PC-9 (cell line): ENCODE measurements at regions of chr17 and their contacts with region 1.

Region 1: DNA sequence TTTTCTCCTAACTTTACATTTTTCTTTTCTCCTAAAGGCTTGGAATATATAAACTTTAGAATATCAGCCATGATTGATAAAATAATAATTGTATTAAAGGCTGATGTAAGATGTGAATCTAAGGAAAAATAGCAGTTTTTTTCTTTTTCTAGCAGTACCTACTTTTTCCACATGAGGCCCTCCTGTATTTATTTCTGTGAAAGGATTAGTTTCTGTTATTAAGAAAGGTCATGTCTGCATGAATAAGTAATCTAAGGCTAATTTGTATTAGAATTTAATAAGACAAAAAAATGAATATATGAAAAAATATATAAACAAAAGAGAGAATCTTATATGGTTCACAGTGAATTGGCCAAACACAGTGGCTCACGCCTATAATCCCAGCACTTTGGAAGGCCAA is 85.3 kb downstream of the STXBP4 start:
- DNase-seq: no peak
- H3K4me3 ChIP-seq: no peak overlapping the region
- H3K27ac ChIP-seq: no peak overlapping the region
- H3K4me1 ChIP-seq: no peaks in the 10 kb centered on the region
- H3K27me3 ChIP-seq: no peaks in the 10 kb centered on the region
- CTCF ChIP-seq: peak; percentile 59

Region 2: DNA sequence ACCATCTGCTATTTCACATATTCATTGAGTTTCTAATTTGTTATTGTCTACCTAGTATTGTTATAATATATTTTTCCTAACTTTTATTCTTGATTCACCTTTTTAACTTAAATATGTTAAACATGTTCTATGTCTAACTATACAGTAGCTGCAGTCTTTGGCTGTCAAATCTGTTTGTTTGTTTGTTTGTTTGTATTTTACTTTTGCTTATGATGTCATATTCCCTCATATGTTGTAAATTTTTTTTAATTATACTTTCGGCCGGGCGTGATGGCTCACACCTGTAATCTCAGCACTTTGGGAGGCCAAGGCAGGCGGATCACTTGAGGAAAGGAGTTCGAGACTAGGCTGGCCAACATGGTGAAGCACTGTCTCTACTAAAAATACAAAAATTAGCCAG is 33.6 kb before region 1 on chr17:
- CTCF ChIA-PET with region 1: no interaction called
- POLR2A ChIA-PET with region 1: no interaction called
- intact Hi-C with region 1: no loop called
- DNase-seq: no peak
- H3K4me3 ChIP-seq: no peak overlapping the region
- H3K27ac ChIP-seq: no peak overlapping the region
- H3K4me1 ChIP-seq: no peaks in the 10 kb centered on the region
- H3K27me3 ChIP-seq: no peaks in the 10 kb centered on the region
- CTCF ChIP-seq: no peak

Region 3: DNA sequence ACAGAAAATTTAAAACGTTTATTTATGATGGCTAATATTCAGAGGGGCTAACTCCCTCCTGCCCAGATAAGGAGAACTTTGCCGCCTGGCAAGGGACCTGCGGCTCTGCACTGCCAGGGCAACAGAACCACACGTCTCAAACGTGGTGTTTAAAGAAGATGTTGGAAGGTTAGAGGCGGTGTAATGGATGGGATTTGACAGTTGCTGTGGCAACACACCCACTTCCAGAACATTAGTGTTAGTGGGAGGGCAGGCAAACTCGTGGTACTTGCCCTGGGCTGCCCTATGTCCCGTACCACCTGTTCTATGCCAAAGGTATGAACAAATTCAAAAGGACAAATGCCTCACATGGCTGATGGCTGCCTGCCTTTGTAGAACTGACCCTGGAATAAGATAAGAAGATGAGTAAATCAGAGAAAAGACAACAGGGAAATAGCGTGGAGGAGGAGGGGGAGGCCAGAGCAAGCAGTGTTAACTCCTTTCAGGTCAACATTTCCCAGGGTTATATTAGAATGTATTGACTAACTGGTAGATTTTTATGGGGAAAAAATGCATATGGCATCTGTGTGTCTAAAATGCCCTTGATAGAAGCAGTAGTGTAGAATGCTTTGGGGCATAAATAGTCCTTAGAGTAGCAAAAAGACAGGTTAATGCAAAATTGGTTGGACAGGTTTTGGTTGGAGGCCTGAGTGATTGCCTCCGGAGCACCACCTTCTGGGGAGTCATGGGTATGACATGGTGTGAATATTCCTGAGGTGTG is 241.7 kb after region 1 on chr17:
- CTCF ChIA-PET with region 1: no interaction called
- POLR2A ChIA-PET with region 1: no interaction called
- intact Hi-C with region 1: loop called (anchors 5 kb)
- DNase-seq: peak in 1 of 2 experiments; percentile 45
- H3K4me3 ChIP-seq: no peak overlapping the region
- H3K27ac ChIP-seq: no peak overlapping the region
- H3K4me1 ChIP-seq: no peaks in the 10 kb centered on the region
- H3K27me3 ChIP-seq: no peaks in the 10 kb centered on the region
- CTCF ChIP-seq: peak; percentile 90